ENCODE measurements at regions of chr12 and their contacts with region 1.

Region 1: GRCh38 chr12:113030875-113031525 is 25.5 kb upstream of the DTX1 start:
- DNase-seq: peak in 1 of 5 donors; percentile 16
- H3K4me3 ChIP-seq: no peak overlapping the region
- H3K4me3 Mint-ChIP-seq: no peak overlapping the region
- H3K27ac ChIP-seq: no peak overlapping the region
- H3K27ac Mint-ChIP-seq: no peak overlapping the region
- H3K4me1 ChIP-seq: no peaks in the 10 kb centered on the region
- H3K4me1 Mint-ChIP-seq: peaks cover 0 to 5% (median 3%) of the 10 kb centered on the region in 3 donors
- H3K27me3 ChIP-seq: no peaks in the 10 kb centered on the region
- H3K27me3 Mint-ChIP-seq: peaks cover 5 to 6% of the 10 kb centered on the region in 2 donors

Region 2: DNA sequence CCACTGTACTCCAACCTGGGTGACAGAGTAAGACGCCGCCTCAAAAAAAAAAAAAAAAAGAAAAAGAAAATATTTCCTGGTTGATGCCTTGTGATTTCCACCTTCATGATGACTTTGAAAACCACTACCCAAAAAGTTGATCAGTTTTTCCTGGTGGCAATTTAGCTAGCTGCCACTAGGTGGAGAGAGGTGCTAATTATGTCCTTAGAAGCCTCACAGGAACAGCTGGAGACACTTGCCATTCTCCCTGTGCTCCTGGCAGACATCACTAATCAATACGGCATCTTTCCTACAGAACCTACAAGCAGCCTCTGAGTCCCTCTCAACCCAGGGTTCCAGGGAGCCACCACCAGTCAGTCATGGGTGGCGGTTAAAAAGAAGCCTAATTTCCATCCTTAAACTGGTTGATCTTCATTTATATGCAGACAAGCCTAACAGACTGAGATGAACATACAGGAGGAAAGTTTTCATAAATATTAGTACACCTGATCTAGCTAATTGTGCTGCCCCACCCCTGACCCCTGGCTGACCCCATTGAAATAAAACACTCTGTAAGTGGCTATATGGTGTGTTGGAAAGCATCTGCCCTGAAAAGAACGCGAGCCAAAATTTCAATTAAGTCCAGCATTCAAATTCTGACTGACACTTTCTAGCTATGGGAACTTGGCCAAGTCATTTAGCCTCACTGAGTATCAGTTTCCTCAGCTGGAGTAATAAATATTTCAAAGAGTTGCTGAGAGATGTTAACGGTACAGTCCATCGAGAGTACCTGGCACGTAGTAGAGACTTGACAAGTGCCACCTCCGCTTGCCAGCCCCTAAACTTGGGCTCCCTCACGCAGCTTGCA is 130.5 kb before region 1 on chr12:
- CTCF ChIA-PET with region 1: interaction called, 11 read pairs
- POLR2A ChIA-PET with region 1: no interaction called
- DNase-seq: peak in 4 of 5 donors; percentile 16 to 57 (median 25)
- H3K4me3 ChIP-seq: no peak overlapping the region
- H3K4me3 Mint-ChIP-seq: peak overlapping the region in 2 of 7 donors; percentile 35 to 42
- H3K27ac ChIP-seq: no peak overlapping the region
- H3K27ac Mint-ChIP-seq: peak overlapping the region in 4 of 8 donors; percentile 11 to 60 (median 24)
- H3K4me1 ChIP-seq: peaks cover 9% of the 10 kb centered on the region
- H3K4me1 Mint-ChIP-seq: peaks cover 15 to 30% (median 24%) of the 10 kb centered on the region in 3 donors
- H3K27me3 ChIP-seq: no peaks in the 10 kb centered on the region
- H3K27me3 Mint-ChIP-seq: peaks cover 10 to 27% of the 10 kb centered on the region in 2 donors

Measured in CD8-positive, alpha-beta memory T cell (primary cell).